ENCODE measurements at regions of chr11 and their contacts with region 1.

Region 1: GRCh38 chr11:103035791-103036434 is 56.0 kb downstream of the DCUN1D5 start:
- DNase-seq: peak; percentile 50
- CTCF ChIP-seq: peak; percentile 65

Region 2: DNA sequence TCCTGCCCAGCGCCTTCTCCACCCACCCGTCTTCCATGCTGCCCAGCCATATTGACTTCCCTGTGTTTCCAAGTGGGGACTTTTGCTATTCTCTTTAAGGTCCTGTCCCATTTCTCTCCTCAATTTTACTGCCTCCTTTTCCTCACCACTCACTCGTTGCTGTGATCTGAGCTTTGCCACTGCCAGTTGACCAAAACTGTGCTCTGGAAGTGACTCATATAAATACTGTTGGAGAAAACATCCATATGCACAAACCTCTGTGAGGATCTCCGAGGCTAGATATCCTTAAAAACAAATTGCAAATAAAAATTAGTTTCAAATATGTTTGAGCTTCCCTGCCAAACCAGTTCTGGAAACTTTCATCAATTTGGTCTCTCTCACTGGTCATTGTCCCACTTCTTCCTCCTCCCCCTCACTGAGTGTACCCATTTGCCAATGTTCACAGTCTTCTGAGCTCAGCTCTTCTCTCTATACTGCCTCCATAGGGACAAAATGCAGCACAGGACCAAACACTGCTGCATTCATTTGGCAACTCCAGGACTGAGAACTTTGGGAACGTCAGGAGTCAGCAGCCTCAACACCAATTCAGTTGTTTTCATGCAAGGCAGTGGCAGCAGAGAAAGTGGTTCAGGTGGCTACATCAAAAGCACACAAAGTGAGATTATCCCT is 46.4 kb before region 1 on chr11:
- CTCF ChIA-PET with region 1: no interaction called
- POLR2A ChIA-PET with region 1: no interaction called
- DNase-seq: no peak
- CTCF ChIP-seq: no peak

Region 3: GRCh38 chr11:103055221-103055890 is 19.4 kb after region 1 on chr11:
- CTCF ChIA-PET with region 1: interaction called, 20 read pairs
- POLR2A ChIA-PET with region 1: no interaction called
- DNase-seq: peak; percentile 22
- CTCF ChIP-seq: peak; percentile 60

Measured in GM10248 (cell line).